ENCODE measurements at regions of chr5 and their contacts with region 1.

Region 1: GRCh38 chr5:95718203-95718602 is 12.9 kb upstream of the RHOBTB3 start:
- DNase-seq: peak; percentile 18
- H3K4me3 Mint-ChIP-seq: no peak overlapping the region
- H3K27ac Mint-ChIP-seq: no peak overlapping the region
- H3K4me1 Mint-ChIP-seq: no peaks in the 10 kb centered on the region
- H3K27me3 Mint-ChIP-seq: peaks cover 28% of the 10 kb centered on the region

Region 2: DNA sequence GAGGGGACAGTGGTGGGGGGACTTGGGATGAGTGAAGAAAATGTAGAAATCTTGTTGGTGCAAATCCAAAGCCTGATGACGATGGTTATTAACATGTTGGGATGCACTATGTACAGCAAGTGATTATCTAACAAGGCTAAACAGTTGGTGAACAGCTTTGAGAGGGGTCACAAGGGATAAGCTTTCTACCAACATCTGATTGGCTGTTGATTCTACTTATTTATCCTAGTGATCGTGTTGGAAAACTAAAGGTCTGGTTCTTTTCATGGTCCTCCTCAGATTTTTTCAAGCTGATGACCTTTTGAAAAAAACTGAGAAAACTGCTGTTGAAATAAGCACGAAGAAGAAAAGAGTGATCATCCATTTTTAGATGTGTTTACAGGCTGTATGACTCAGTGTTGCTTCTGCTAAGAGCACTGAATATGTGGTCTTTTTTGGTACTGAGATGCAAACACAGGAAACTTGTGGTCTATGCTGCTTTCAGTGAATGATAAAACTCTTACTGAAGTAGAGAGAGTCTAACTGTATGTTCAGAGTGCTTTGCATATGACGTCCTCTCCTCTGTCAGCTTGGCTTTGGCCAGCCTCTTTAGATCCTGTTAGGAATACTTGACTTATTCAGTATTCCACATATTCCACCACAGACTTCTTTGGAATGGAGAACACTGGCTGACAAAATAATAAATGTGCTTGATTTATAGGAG is 924.9 kb before region 1 on chr5:
- intact Hi-C with region 1: loop called (anchors 10 kb)
- DNase-seq: peak; percentile 47
- H3K4me3 Mint-ChIP-seq: peak overlapping the region; percentile 64
- H3K27ac Mint-ChIP-seq: peak overlapping the region; percentile 94
- H3K4me1 Mint-ChIP-seq: peaks cover 67% of the 10 kb centered on the region
- H3K27me3 Mint-ChIP-seq: no peaks in the 10 kb centered on the region

Region 3: GRCh38 chr5:95664204-95664786 is 53.9 kb before region 1 on chr5:
- intact Hi-C with region 1: loop called (anchors 2 kb)
- DNase-seq: no peak
- H3K4me3 Mint-ChIP-seq: no peak overlapping the region
- H3K27ac Mint-ChIP-seq: no peak overlapping the region
- H3K4me1 Mint-ChIP-seq: no peaks in the 10 kb centered on the region
- H3K27me3 Mint-ChIP-seq: peaks cover 16% of the 10 kb centered on the region

Region 4: DNA sequence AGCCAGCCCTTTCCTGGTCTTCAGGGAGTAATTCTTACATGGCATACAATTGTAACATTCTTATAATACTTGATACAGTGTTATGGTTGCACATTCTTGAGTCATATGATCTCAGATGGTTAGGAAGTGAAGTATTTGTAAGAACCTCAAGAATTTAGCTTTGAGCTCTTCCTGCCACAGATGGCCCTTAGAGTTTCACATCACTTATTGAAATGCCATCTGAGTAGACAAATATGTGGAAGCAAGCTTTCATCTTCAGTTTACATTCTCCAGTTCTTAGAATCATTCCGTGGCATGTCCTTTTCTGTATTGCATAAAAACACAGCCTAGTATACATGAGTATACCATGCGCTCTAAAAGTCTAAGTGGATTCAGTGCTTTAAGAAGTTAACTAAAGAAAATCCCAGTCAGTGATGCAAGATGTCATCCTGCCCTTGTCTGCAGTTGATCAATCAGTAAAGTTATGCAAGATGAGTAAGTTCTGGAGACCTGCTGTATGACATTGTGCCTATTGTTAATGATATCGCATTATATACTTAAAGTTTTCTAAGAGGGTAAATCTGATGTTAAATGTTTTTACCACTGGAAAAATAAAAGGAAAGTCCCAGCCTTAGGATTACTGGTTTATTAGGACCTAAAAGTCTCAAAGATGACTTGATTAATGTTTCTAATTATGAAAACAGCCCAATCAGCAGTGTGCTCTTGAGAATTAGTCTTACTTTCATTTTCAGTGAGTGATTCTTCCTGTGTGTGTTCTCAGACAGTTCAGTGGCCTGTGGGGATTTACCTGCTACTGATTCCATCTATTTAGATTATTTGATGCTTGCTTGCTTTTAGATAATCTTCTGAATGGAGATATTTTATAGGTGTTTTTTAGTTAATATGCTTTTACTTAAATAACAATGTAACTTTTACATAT is 42.3 kb after region 1 on chr5:
- intact Hi-C with region 1: loop called (anchors 1 kb)
- DNase-seq: no peak
- H3K4me3 Mint-ChIP-seq: peak overlapping the region; percentile 52
- H3K27ac Mint-ChIP-seq: peak overlapping the region; percentile 45
- H3K4me1 Mint-ChIP-seq: peaks cover 30% of the 10 kb centered on the region
- H3K27me3 Mint-ChIP-seq: peaks cover 22% of the 10 kb centered on the region

Region 5: DNA sequence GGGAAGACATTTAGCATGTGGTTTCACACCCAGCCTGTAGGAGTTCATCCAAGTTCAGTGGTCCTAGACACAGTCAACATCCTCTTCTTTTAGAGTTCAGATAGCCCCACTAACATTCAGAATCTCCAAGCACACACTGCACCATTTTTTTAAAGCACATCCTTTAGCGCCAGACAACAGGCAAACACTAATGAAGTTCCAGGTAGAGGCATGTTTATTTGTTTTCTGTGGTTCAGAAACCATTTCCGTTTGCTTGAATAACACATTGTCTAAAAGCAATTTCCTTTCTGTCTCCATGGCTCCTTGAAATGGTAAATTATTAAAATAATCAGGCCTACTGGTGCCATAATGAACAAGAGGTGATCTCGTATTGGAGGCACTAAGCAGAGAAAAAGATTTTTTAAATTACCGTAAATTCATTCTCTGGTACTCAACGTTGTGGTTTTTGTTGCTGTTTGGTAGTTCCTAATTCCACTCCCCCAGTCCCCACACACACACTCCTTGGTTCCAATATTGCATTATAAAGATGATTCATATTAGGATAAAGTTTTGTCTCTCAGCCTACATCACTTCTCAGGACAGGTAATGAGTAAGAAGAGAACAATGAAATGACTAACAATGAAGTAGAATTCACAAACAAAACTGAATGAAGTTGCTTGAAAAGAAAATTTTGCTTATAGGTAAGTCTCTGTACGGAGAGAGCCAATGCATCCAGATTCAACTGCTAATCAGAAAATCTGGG is 561.8 kb after region 1 on chr5:
- intact Hi-C with region 1: loop called (anchors 2 kb)
- DNase-seq: peak; percentile 14
- H3K4me3 Mint-ChIP-seq: peak overlapping the region; percentile 27
- H3K27ac Mint-ChIP-seq: peak overlapping the region; percentile 56
- H3K4me1 Mint-ChIP-seq: peaks cover 40% of the 10 kb centered on the region
- H3K27me3 Mint-ChIP-seq: peaks cover 4% of the 10 kb centered on the region

Region 6: GRCh38 chr5:96876292-96876850 is 1158.2 kb after region 1 on chr5 and contains the start of gene ERAP2:
- intact Hi-C with region 1: loop called (anchors 10 kb)
- DNase-seq: no peak
- H3K4me3 Mint-ChIP-seq: peak within 1 kb of the TSS; percentile 93
- H3K27ac Mint-ChIP-seq: peak within 1 kb of the TSS; percentile 99
- H3K4me1 Mint-ChIP-seq: peaks cover 66% of the 10 kb centered on the region
- H3K27me3 Mint-ChIP-seq: no peaks in the 10 kb centered on the region
- total RNA-seq, gene ERAP2: 52.9 and 54.4 TPM in 2 replicates